A673 (cell line): ENCODE measurements at regions of chr19 and their contacts with region 1.

Region 1: GRCh38 chr19:38849860-38850435 is at the start of gene HNRNPL:
- DNase-seq: no peak
- H3K4me3 ChIP-seq: peak within 1 kb of the TSS; percentile 88
- H3K27ac ChIP-seq: peak within 1 kb of the TSS; percentile 100
- H3K4me1 ChIP-seq: peaks cover 13% of the 10 kb centered on the region
- H3K27me3 ChIP-seq: no peaks in the 10 kb centered on the region
- CTCF ChIP-seq: peak; percentile 42
- total RNA-seq, gene HNRNPL: 642 and 647 TPM in 2 replicates

Region 2: DNA sequence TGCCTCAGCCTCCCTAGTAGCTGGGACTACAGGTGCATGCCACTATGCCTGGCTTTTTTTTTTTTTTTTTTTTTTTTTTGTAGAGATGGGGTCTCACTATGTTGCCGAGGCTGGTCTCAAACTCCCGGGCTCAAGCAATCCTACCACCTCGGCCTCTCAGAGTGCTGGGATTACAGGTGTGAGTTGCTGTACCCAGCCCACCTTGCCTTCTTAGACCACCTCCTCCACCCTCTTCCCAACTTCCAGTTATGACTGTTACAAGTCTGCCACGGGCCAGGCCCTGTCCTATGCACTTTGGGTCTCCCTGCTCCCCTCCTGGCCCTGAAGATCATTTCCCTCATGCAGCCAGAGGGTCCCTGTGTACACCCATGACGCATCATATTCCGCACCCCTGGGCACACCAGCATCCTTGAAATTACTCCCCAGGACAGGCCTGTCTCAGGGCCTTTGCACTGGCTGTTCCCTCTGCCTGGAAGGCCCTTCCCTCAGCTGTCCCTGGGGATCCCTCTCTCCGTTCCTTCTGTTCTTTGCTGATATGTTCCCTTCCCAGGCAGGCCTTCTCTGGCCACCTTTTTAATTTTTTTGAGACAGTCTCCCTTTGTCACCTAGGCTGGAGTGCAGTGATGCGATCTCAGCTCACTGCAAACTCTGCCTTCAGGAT is 40.2 kb before region 1 on chr19:
- CTCF ChIA-PET with region 1: no interaction called
- POLR2A ChIA-PET with region 1: interaction called, 11 read pairs
- intact Hi-C with region 1: no loop called
- DNase-seq: no peak
- H3K4me3 ChIP-seq: no peak overlapping the region
- H3K27ac ChIP-seq: no peak overlapping the region
- H3K4me1 ChIP-seq: no peaks in the 10 kb centered on the region
- H3K27me3 ChIP-seq: no peaks in the 10 kb centered on the region
- CTCF ChIP-seq: no peak

Region 3: DNA sequence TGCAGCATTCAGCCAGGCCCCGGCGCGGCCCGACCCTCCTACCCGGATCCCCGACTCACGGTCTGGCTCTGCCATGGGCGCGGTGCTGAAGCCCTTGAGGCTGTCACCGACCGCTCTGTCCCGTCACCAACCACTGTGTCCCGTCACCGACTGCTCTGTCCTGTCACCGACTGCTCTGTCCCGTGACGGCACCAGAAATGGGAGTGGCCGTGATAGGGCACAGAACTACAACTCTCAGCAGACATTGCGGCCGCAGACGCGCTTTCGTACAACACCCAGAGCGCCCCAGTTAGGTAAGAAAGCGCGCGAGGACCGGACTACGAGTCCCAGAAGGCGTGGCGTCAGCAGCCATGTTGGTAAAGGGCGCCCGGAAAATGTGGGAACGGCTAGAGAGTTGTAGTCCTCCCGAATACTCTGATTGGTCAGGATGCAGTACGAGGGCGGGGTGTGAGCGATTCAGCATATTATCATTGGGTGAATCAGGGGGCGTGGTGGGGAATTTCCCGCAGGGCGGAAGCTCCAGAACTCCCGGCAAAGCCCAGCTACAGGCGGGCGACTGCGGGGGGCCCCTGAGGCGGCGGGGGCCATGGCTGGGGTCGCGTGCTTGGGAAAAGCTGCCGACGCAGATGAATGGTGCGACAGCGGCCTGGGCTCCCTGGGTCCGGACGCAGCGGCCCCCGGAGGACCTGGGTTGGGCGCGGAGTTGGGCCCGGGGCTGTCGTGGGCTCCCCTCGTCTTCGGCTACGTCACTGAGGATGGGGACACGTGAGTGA is 49.7 kb after region 1 on chr19 and contains the starts of genes NFKBIB and SIRT2:
- CTCF ChIA-PET with region 1: no interaction called
- POLR2A ChIA-PET with region 1: no interaction called
- intact Hi-C with region 1: loop called (anchors 2 kb)
- DNase-seq: peak; percentile 100
- H3K4me3 ChIP-seq: peak within 1 kb of the TSS; percentile 69
- H3K27ac ChIP-seq: peak within 1 kb of the TSS; percentile 86
- H3K4me1 ChIP-seq: peaks cover 4% of the 10 kb centered on the region
- H3K27me3 ChIP-seq: no peaks in the 10 kb centered on the region
- CTCF ChIP-seq: no peak
- total RNA-seq, gene NFKBIB: 42.4 and 51.9 TPM in 2 replicates
- total RNA-seq, gene SIRT2: 30.0 and 32.2 TPM in 2 replicates